Activated CD8-positive, alpha-beta T cell treated with anti-CD3 and anti-CD28 coated beads for 36 hours (primary cell): ENCODE measurements at regions of chr3 and their contacts with region 1.

Region 1: GRCh38 chr3:171772427-171773056 is 37.7 kb downstream of the PLD1 start:
- DNase-seq: peak; percentile 70
- ATAC-seq: peak; percentile 56
- H3K4me3 Mint-ChIP-seq: no peak overlapping the region
- H3K27ac Mint-ChIP-seq: no peak overlapping the region
- H3K4me1 Mint-ChIP-seq: no peaks in the 10 kb centered on the region
- H3K27me3 Mint-ChIP-seq: peaks cover 6% of the 10 kb centered on the region
- CTCF ChIP-seq: peak; percentile 60

Region 2: DNA sequence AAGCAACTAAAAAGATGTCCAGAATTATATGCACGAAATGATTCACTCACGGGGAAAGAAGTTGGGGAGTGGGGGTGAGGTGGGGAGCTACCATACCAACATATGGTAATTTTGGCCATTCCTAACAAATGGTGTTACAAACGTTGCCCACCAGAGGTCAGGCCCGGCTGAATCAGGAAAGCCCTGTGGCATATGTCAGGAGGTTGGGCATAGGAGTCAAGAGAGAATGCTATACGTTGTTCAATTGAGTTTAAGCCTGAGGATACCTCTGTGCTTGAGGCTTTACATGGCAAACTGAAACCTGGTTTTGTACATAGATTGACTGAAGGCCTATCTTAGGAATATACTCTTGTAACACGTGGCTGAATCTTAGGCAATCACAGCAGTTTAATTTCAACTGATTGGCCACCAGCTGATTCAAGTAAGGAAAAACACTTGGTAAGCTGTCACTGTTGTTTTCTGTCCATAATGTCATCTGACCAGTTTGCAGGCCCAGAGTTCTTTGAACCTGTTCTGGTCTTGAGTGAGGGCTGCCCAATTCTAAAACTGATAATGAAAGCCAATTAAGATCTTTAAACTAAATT is 722.6 kb before region 1 on chr3:
- CTCF ChIA-PET with region 1: interaction called, 17 read pairs
- POLR2A ChIA-PET with region 1: no interaction called
- intact Hi-C with region 1: no loop called
- DNase-seq: peak; percentile 67
- ATAC-seq: peak; percentile 89
- H3K4me3 Mint-ChIP-seq: no peak overlapping the region
- H3K27ac Mint-ChIP-seq: no peak overlapping the region
- H3K4me1 Mint-ChIP-seq: no peaks in the 10 kb centered on the region
- H3K27me3 Mint-ChIP-seq: peaks cover 21% of the 10 kb centered on the region
- CTCF ChIP-seq: peak; percentile 40

Region 3: GRCh38 chr3:171614318-171614921 is 158.1 kb before region 1 on chr3:
- CTCF ChIA-PET with region 1: interaction called, 23 read pairs
- POLR2A ChIA-PET with region 1: no interaction called
- intact Hi-C with region 1: no loop called
- DNase-seq: peak; percentile 14
- ATAC-seq: no peak
- H3K4me3 Mint-ChIP-seq: no peak overlapping the region
- H3K27ac Mint-ChIP-seq: no peak overlapping the region
- H3K4me1 Mint-ChIP-seq: no peaks in the 10 kb centered on the region
- H3K27me3 Mint-ChIP-seq: peaks cover 5% of the 10 kb centered on the region
- CTCF ChIP-seq: peak; percentile 39

Region 4: GRCh38 chr3:171646357-171647133 is 126.0 kb before region 1 on chr3:
- CTCF ChIA-PET with region 1: interaction called, 40 read pairs
- POLR2A ChIA-PET with region 1: no interaction called
- intact Hi-C with region 1: no loop called
- DNase-seq: no peak
- ATAC-seq: no peak
- H3K4me3 Mint-ChIP-seq: no peak overlapping the region
- H3K27ac Mint-ChIP-seq: no peak overlapping the region
- H3K4me1 Mint-ChIP-seq: no peaks in the 10 kb centered on the region
- H3K27me3 Mint-ChIP-seq: no peaks in the 10 kb centered on the region
- CTCF ChIP-seq: peak; percentile 49

Region 5: GRCh38 chr3:171757361-171758034 is 15.0 kb before region 1 on chr3:
- CTCF ChIA-PET with region 1: interaction called, 18 read pairs
- POLR2A ChIA-PET with region 1: interaction called, 4 read pairs
- intact Hi-C with region 1: no loop called
- DNase-seq: no peak
- ATAC-seq: no peak
- H3K4me3 Mint-ChIP-seq: no peak overlapping the region
- H3K27ac Mint-ChIP-seq: no peak overlapping the region
- H3K4me1 Mint-ChIP-seq: no peaks in the 10 kb centered on the region
- H3K27me3 Mint-ChIP-seq: peaks cover 9% of the 10 kb centered on the region
- CTCF ChIP-seq: no peak

Region 6: GRCh38 chr3:172341482-172342059 is 569.0 kb after region 1 on chr3:
- CTCF ChIA-PET with region 1: interaction called, 11 read pairs
- POLR2A ChIA-PET with region 1: no interaction called
- intact Hi-C with region 1: no loop called
- DNase-seq: peak; percentile 16
- ATAC-seq: peak; percentile 81
- H3K4me3 Mint-ChIP-seq: no peak overlapping the region
- H3K27ac Mint-ChIP-seq: no peak overlapping the region
- H3K4me1 Mint-ChIP-seq: no peaks in the 10 kb centered on the region
- H3K27me3 Mint-ChIP-seq: no peaks in the 10 kb centered on the region
- CTCF ChIP-seq: peak; percentile 83